Natural killer cell (primary cell): ENCODE measurements at regions of chr2 and their contacts with region 1.

Region 1: DNA sequence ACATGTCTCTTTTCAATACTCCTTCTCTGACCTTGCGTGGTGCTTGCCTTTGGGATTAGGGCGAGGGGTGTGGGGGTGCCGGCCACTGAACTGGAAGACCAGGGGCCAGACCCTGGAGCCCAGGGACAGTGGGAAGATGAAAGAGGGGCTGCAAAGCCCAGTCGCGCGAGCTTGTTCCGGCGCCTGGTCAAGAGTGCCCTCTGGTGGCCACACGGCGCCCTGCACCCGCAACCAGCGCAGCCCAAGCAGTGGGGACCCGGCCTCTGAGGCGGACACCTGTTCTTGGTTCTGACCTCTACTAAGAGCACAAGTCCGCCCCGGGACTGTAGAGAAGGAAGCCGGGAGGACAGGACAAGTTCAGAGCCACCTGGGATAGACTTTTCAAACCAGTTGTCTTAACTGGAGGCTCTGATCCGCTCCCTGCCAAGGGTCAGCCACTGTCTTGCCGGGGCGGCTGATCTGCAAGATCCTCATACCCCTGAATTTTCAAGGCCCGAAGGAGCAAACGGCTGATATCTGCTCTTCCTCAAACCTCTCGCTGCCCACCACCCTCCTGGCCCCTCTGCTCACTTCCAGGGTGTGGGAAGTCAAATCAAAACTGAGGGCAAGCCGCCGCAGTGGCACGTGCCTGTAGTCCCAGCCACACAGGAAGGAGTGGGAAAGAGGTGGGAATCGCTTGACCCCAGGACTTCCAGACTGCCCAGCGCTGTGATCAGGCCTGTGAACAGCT is 14.9 kb upstream of the MSH6 start:
- DNase-seq: peak; percentile 75 to 80
- ATAC-seq: peak; percentile 86 to 97 (median 96)
- H3K4me3 ChIP-seq: no peak overlapping the region
- H3K4me3 Mint-ChIP-seq: no peak overlapping the region
- H3K27ac ChIP-seq: no peak overlapping the region
- H3K27ac Mint-ChIP-seq: no peak overlapping the region
- H3K4me1 ChIP-seq: peaks cover 8% of the 10 kb centered on the region
- H3K4me1 Mint-ChIP-seq: peaks cover 0 to 9% of the 10 kb centered on the region in 2 donors
- H3K27me3 ChIP-seq: peaks cover 2% of the 10 kb centered on the region
- H3K27me3 Mint-ChIP-seq: peaks cover 0 to 2% of the 10 kb centered on the region in 2 donors
- CTCF ChIP-seq: peak; percentile 98

Region 2: DNA sequence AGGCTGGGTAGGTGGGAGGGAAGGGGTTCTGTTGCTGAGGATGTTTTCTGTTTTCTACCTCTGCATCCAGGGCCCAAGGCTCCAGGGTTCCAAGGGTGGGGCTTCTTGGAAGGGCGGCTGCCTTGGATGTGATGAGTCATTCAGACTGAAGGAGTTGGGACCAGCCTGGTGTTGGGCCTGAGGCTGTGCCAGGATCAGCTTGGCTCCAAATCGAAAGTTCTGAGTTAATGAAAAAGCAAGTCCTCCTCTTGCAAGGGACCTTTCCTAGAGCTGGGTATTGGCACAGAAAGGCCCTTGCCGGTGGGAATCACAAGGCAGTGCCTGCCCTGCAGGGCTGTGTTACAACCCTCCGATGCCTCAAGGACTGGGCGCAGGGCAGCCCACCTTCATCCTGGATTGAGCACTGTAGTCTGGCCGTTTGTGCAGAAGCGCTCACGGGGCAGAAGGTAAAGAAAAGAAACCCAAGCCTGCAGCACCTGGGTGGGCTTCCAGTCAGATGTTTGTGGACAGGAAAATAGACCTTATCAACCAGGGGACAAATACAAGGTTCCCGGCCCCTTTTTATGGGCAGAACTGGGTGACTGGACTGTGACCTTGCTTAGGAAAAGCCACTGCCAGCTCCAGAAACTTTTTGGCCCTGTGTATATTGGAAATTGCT is 799.9 kb before region 1 on chr2:
- intact Hi-C with region 1: no loop called
- DNase-seq: no peak
- ATAC-seq: no peak
- H3K4me3 ChIP-seq: no peak overlapping the region
- H3K4me3 Mint-ChIP-seq: no peak overlapping the region
- H3K27ac ChIP-seq: no peak overlapping the region
- H3K27ac Mint-ChIP-seq: no peak overlapping the region
- H3K4me1 ChIP-seq: peaks cover 27% of the 10 kb centered on the region
- H3K4me1 Mint-ChIP-seq: peaks cover 7 to 23% of the 10 kb centered on the region in 2 donors
- H3K27me3 ChIP-seq: no peaks in the 10 kb centered on the region
- H3K27me3 Mint-ChIP-seq: no peaks in the 10 kb centered on the region
- CTCF ChIP-seq: no peak

Region 3: GRCh38 chr2:47437287-47437686 is 330.8 kb before region 1 on chr2:
- intact Hi-C with region 1: loop called (anchors 2 kb)
- DNase-seq: peak in 1 of 2 donors; percentile 9
- ATAC-seq: no peak
- H3K4me3 ChIP-seq: no peak overlapping the region
- H3K4me3 Mint-ChIP-seq: no peak overlapping the region
- H3K27ac ChIP-seq: no peak overlapping the region
- H3K27ac Mint-ChIP-seq: no peak overlapping the region
- H3K4me1 ChIP-seq: no peaks in the 10 kb centered on the region
- H3K4me1 Mint-ChIP-seq: no peaks in the 10 kb centered on the region
- H3K27me3 ChIP-seq: no peaks in the 10 kb centered on the region
- H3K27me3 Mint-ChIP-seq: no peaks in the 10 kb centered on the region
- CTCF ChIP-seq: peak; percentile 56